Posterior cingulate gyrus (tissue), 11 donors: ENCODE measurements at regions of chr1 and their contacts with region 1.

Region 1: GRCh38 chr1:51627678-51628077 is 10.8 kb downstream of the OSBPL9 start:
- DNase-seq: no peak

Region 2: GRCh38 chr1:51768971-51769588 is 141.4 kb after region 1 on chr1:
- intact Hi-C with region 1: loop called (anchors 5 kb)
- DNase-seq: peak in 2 of 10 donors; percentile 18 to 23

Region 3: GRCh38 chr1:51878616-51879336 is 251.1 kb after region 1 on chr1 and contains the start of gene NRDC:
- intact Hi-C with region 1: loop called (anchors 10 kb)
- DNase-seq: peak; percentile 97 to 100 (median 99)